PC-9 (cell line): ENCODE measurements at regions of chr3 and their contacts with region 1.

Region 1: DNA sequence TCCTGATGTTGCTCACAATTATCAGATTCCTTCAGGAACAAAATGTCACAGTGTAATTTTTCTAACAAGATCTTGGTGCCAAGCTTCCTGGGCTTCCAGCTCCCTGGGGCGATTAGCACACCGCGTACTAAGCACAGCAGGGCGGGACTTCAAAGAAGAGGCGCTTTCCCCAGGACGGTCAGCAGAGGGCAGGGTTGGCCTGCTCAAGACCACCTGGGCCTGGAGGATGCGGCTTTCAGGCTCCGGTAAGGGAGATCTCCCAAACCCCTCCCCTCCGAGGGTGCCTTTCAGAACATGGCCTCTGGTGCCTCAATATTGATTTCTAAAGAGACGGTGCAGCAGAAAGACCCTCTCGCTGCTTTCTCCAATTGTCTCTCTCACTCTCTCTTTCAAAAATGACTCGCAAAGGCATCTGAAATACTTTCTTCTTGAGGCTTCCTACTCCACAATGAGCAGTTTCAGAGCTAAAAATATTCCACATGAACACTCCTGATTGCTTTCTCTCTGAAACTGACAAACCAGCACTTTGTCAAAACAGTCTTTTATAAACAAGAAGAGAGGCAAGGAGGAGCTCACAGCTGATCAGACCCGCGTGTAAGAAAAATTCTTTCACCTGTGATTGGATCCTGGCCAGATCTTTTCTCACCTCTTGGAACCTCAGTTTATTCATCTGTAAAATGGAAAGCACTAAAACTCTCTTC is 154.0 kb downstream of the ADAMTS9 start:
- DNase-seq: peak; percentile 57 to 80
- H3K4me3 ChIP-seq: no peak overlapping the region
- H3K27ac ChIP-seq: no peak overlapping the region
- H3K4me1 ChIP-seq: no peaks in the 10 kb centered on the region
- H3K27me3 ChIP-seq: no peaks in the 10 kb centered on the region
- CTCF ChIP-seq: peak; percentile 77

Region 2: DNA sequence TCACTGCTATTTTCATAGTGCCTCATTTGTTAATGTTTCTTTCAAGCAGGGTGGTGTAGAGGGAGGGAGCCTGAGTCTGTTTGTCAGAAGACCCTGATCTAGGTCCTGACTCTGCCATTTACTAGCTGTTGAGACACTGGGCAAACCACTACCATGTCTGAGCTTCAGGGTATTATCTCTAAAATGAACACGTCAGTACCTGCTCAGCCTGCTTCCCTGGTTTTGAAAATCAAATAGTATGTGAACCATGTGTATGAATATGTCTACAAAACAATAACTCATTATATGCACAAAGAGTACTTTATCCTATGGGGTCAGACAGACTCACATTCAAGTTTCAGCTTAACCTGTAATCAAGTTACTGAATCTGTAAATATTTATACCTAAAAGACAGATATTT is 1230.5 kb before region 1 on chr3:
- CTCF ChIA-PET with region 1: no interaction called
- POLR2A ChIA-PET with region 1: no interaction called
- intact Hi-C with region 1: no loop called
- DNase-seq: no peak
- H3K4me3 ChIP-seq: no peak overlapping the region
- H3K27ac ChIP-seq: no peak overlapping the region
- H3K4me1 ChIP-seq: no peaks in the 10 kb centered on the region
- H3K27me3 ChIP-seq: no peaks in the 10 kb centered on the region
- CTCF ChIP-seq: no peak

Region 3: GRCh38 chr3:64870876-64871646 is 337.3 kb after region 1 on chr3:
- CTCF ChIA-PET with region 1: interaction called, 15 read pairs
- POLR2A ChIA-PET with region 1: no interaction called
- intact Hi-C with region 1: no loop called
- DNase-seq: no peak
- H3K4me3 ChIP-seq: no peak overlapping the region
- H3K27ac ChIP-seq: no peak overlapping the region
- H3K4me1 ChIP-seq: peaks cover 7% of the 10 kb centered on the region; the same call in 1 of the 2 replicates
- H3K27me3 ChIP-seq: no peaks in the 10 kb centered on the region
- CTCF ChIP-seq: no peak

Region 4: GRCh38 chr3:65245133-65246063 is 711.6 kb after region 1 on chr3:
- CTCF ChIA-PET with region 1: interaction called, 3 read pairs
- POLR2A ChIA-PET with region 1: no interaction called
- intact Hi-C with region 1: loop called (anchors 2 kb)
- DNase-seq: no peak
- H3K4me3 ChIP-seq: no peak overlapping the region
- H3K27ac ChIP-seq: no peak overlapping the region
- H3K4me1 ChIP-seq: no peaks in the 10 kb centered on the region
- H3K27me3 ChIP-seq: no peaks in the 10 kb centered on the region
- CTCF ChIP-seq: peak; percentile 50

Region 5: GRCh38 chr3:65356331-65357286 is 822.8 kb after region 1 on chr3:
- CTCF ChIA-PET with region 1: no interaction called
- POLR2A ChIA-PET with region 1: no interaction called
- intact Hi-C with region 1: loop called (anchors 10 kb)
- DNase-seq: no peak
- H3K4me3 ChIP-seq: no peak overlapping the region
- H3K27ac ChIP-seq: no peak overlapping the region
- H3K4me1 ChIP-seq: no peaks in the 10 kb centered on the region
- H3K27me3 ChIP-seq: no peaks in the 10 kb centered on the region
- CTCF ChIP-seq: no peak

Region 6: DNA sequence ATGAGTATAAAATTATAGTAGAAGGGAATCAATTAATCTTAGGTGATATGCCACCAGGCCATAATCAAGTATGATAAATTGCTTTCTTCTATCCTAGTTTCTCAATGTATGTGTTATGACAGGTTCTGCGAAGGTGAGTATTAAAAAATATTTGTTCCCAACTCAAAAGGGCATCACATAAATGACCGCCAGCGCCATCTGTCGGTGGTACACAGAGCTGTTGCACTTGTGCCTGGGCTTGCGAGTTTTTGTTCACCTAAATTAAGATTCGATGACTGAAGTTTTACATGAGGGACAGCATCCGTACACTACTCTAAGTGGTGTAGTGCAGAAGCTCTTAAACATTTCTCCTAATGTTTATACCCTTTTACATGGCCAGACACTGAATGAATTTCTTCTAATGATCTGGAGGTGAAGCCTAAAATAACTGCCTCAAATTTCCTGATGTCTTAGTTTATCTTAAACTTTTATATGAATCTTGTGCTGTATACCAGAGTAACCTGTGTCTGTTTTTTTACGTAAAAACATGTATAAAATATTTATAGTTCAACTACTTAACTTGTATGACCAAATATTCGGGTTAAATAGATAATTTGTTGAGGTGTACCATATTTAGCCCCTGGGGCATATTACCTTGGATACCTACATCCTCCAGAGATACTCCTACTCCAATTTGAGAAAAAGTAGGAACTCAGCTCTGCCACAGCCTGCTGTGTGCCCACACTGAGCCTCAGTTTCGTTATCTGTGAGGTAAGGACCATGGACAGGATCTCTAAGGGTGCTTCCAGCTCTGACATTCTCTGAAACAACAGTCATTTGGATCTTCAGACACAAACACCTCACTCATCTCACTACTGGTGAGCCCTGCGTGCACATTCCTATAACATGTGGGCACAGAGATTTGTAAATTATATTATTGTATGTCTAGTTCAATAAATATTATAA is 1139.4 kb after region 1 on chr3:
- CTCF ChIA-PET with region 1: no interaction called
- POLR2A ChIA-PET with region 1: no interaction called
- intact Hi-C with region 1: loop called (anchors 10 kb)
- DNase-seq: peak in 1 of 2 experiments; percentile 43
- H3K4me3 ChIP-seq: no peak overlapping the region
- H3K27ac ChIP-seq: no peak overlapping the region
- H3K4me1 ChIP-seq: no peaks in the 10 kb centered on the region
- H3K27me3 ChIP-seq: no peaks in the 10 kb centered on the region
- CTCF ChIP-seq: peak; percentile 70

Region 7: DNA sequence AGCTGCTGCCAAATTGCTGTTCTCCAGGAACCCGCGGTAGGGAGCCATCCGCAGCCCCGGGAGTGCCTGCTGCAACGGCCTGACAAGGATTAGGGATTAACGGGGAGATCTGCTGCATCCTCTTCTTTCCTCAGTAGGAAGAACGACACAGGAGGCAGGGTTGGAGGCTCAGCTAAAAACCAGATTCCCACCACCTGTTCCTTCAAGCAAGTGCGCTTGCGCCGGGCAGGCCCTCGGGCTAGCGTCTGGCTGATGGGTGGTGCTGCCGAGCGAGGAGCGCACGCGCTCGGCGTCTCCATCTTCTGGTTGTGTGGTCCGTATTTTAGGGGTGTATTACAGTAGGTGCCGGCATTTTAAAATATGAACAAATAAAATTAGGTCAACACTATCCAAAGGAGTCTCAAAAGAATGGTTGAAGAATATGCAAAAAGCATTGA is 1661.6 kb after region 1 on chr3:
- CTCF ChIA-PET with region 1: no interaction called
- POLR2A ChIA-PET with region 1: no interaction called
- intact Hi-C with region 1: loop called (anchors 2 kb)
- DNase-seq: peak; percentile 41 to 55
- H3K4me3 ChIP-seq: peak overlapping the region; percentile 66
- H3K27ac ChIP-seq: no peak overlapping the region
- H3K4me1 ChIP-seq: no peaks in the 10 kb centered on the region; the same call in 1 of the 2 replicates
- H3K27me3 ChIP-seq: no peaks in the 10 kb centered on the region
- CTCF ChIP-seq: no peak; the same call in 1 of the 2 replicates